Right cardiac atrium (tissue), 5 donors: ENCODE measurements at regions of chr10 and their contacts with region 1.

Region 1: DNA sequence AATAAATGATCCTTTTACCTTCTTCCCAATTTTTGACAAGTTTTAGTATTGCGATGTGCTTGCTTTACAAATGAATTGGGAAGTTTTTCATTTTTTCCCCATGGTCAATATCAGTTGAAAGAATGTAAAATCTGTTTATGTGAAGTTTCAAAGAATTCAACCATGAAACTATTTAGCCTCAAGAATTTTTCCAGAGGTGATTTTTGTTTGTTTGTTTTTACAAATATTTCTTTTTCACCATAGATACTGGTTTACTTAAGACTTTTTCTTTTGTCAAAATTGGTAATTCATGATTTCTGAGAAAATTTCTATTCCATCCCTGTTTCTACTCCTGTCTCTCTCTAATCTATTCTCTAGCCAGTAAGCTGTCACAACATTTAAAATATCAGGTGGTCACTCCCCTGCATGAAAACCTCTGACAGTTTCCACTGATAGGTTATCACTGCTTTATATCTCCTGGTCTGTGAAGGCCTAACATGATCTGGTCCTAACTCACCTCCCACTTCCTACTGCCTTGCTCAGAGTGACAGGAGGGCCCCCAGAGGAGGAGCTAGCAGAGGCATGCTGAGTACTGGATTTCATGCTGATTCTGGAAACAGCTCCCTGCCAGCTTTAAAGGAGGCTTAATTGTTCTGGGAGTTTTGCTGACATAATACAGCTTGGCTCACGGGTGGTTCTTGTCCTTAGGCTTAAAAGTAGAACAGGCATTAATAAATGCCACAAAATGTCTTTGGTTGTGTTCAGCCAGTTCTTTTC is 7.6 kb upstream of the ARMS2 start:
- DNase-seq: no peak
- ATAC-seq: peak; percentile 60 to 62
- H3K4me3 ChIP-seq: no peak overlapping the region
- H3K27ac ChIP-seq: no peak overlapping the region
- H3K4me1 ChIP-seq: peaks cover 2% of the 10 kb centered on the region
- H3K27me3 ChIP-seq: no peaks in the 10 kb centered on the region

Region 2: GRCh38 chr10:122258136-122259074 is 188.4 kb before region 1 on chr10:
- intact Hi-C with region 1: no loop called
- DNase-seq: no peak
- ATAC-seq: peak; percentile 47 to 54
- H3K4me3 ChIP-seq: no peak overlapping the region
- H3K27ac ChIP-seq: no peak overlapping the region
- H3K4me1 ChIP-seq: no peaks in the 10 kb centered on the region
- H3K27me3 ChIP-seq: no peaks in the 10 kb centered on the region

Region 3: DNA sequence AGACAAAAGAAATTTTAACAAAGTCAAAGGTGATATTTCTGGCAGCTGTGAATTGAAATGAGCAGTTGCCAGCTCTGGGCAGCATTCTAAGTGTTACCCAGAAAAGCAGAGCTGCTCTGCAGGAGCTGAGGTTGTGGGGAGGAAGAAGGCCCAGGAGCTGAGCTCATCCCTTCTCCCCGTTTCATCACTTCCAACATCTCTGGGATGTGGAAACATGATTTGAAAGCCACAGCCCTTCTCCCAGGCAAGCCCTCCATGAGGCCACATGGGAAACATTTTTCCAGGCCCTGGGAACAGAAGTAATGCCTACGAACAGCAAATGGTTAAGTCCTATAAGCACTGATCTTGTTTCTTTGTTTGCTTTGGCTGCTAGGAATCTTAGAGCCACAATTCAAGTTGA is 102.8 kb after region 1 on chr10:
- intact Hi-C with region 1: loop called in 1 of 4 experiments (anchors 5 kb)
- DNase-seq: no peak
- ATAC-seq: no peak
- H3K4me3 ChIP-seq: no peak overlapping the region
- H3K27ac ChIP-seq: no peak overlapping the region
- H3K4me1 ChIP-seq: no peaks in the 10 kb centered on the region
- H3K27me3 ChIP-seq: no peaks in the 10 kb centered on the region